Activated naive CD4-positive, alpha-beta T cell treated with anti-CD3 and anti-CD28 coated beads, Interleukin-2, amount 10 ng/mL, durations not matched to agents 7 days and 5 days (primary cell): ENCODE measurements at regions of chr3 and their contacts with region 1.

Region 1: DNA sequence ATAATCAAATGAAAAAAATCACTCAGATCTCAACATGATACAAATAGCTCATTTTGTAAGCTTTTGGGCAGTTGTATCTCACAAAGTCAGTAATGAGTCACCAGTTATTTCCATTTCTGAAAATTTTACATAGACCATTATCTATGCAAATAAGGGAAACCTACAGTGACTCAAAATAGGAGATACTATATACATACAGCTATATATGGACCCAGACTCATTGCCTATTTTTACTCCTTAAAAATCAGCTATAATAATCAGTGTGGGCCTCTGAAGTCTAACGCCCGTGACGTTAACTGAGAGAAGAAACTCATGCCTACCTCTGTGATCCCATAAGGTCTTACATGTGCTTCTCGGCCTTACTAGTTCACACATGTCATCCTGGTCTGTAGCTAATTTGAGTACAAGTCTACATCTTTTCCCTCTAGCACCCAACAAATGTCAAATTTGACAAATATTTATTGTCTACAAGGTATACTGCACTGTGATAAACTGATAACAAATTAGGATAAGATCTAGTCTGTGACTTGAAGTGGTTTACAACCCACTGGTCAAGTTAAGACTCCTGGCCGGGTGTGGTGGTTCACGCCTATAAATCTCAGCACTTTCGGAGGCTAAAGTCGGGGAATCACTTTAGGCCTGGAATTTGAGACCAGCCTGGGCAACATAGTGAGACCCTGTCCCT is 31.5 kb downstream of the LRIG1 start:
- DNase-seq: no peak
- H3K4me3 Mint-ChIP-seq: no peak overlapping the region
- H3K27ac Mint-ChIP-seq: no peak overlapping the region
- H3K4me1 Mint-ChIP-seq: peaks cover 62% of the 10 kb centered on the region
- H3K27me3 Mint-ChIP-seq: no peaks in the 10 kb centered on the region

Region 2: GRCh38 chr3:66302288-66302687 is 167.1 kb before region 1 on chr3:
- CTCF ChIA-PET with region 1: no interaction called
- DNase-seq: peak; percentile 53
- H3K4me3 Mint-ChIP-seq: no peak overlapping the region
- H3K27ac Mint-ChIP-seq: peak overlapping the region; percentile 90
- H3K4me1 Mint-ChIP-seq: peaks cover 66% of the 10 kb centered on the region
- H3K27me3 Mint-ChIP-seq: no peaks in the 10 kb centered on the region

Region 3: GRCh38 chr3:66442254-66443117 is 26.9 kb before region 1 on chr3:
- CTCF ChIA-PET with region 1: no interaction called
- DNase-seq: no peak
- H3K4me3 Mint-ChIP-seq: no peak overlapping the region
- H3K27ac Mint-ChIP-seq: no peak overlapping the region
- H3K4me1 Mint-ChIP-seq: peaks cover 17% of the 10 kb centered on the region
- H3K27me3 Mint-ChIP-seq: no peaks in the 10 kb centered on the region

Region 4: DNA sequence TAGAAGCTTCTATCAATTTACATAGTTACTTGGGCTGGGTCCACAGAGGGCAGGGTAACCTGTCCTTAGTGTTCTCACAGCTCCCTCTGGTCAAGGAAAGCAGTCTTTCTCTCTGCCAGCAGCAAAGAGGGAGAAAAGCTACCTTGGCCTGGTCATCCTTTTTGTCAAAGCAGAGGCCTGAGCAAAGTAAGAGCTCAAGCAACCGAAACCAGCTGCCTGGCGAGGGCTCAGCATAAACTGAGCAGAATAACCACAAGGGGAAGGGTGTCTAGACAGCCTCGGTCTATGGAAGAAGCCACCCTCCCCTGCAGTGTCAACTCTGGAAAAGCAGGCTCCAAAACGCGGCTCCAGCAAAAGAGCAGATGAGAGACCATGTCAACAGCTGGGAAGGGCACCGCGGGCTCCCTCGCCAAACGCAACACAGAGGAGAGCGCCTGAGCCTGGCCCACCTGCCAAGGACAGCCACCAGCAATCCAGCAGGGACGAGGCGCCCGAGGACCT is 14.1 kb after region 1 on chr3:
- CTCF ChIA-PET with region 1: interaction called, 10 read pairs
- DNase-seq: peak; percentile 26
- H3K4me3 Mint-ChIP-seq: peak overlapping the region; percentile 25
- H3K27ac Mint-ChIP-seq: peak overlapping the region; percentile 42
- H3K4me1 Mint-ChIP-seq: peaks cover 47% of the 10 kb centered on the region
- H3K27me3 Mint-ChIP-seq: no peaks in the 10 kb centered on the region